AG04450 (cell line): ENCODE measurements at regions of chr2 and their contacts with region 1.

Region 1: GRCh38 chr2:178761759-178762371 is 45.4 kb downstream of the TTN start:
- DNase-seq: peak; percentile 6
- H3K4me3 ChIP-seq: no peak overlapping the region
- H3K27ac ChIP-seq: no peak overlapping the region
- H3K27me3 ChIP-seq: no peaks in the 10 kb centered on the region
- CTCF ChIP-seq: peak; percentile 83

Region 2: DNA sequence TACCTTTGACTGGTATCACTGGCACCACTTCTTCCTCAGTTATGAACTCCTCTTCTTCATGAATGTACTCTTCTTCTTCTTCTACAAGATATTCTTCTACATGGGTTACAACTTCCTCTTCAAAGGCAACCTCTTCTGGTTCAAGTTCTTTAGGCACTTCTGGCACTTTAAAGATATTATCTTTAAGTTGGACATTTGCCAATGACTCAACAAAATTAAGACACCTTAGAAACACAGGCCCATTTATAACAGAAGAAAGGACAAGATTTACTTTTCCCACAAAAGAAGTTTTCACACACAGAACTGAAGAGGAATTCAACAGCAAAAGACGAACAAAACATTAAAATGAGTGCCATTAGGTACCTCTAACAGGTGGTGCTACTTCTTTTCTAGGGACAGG is 82.0 kb before region 1 on chr2:
- CTCF ChIA-PET with region 1: no interaction called
- POLR2A ChIA-PET with region 1: no interaction called
- DNase-seq: no peak
- H3K4me3 ChIP-seq: no peak overlapping the region
- H3K27ac ChIP-seq: no peak overlapping the region
- H3K27me3 ChIP-seq: no peaks in the 10 kb centered on the region
- CTCF ChIP-seq: no peak

Region 3: DNA sequence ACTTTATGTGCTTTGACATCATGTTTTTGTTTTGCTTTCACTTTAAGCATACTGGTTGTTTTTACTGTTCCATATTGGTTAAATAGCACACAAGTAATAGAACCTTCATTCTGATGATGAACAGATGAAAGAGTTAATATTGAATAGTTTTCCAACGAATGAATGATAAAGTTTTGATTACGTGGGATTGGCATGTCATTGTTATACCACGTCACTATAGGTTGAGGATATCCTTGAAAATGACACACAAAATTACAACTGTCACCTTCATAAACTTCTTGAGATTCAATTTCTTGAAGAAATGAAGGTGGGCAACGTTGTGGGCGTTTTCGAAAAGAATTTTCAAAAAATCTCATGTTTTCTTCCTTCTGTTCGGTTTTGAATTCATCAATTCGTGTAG is 11.6 kb before region 1 on chr2:
- CTCF ChIA-PET with region 1: interaction called, 13 read pairs
- POLR2A ChIA-PET with region 1: no interaction called
- DNase-seq: no peak
- H3K4me3 ChIP-seq: no peak overlapping the region
- H3K27ac ChIP-seq: no peak overlapping the region
- H3K27me3 ChIP-seq: no peaks in the 10 kb centered on the region
- CTCF ChIP-seq: no peak

Region 4: DNA sequence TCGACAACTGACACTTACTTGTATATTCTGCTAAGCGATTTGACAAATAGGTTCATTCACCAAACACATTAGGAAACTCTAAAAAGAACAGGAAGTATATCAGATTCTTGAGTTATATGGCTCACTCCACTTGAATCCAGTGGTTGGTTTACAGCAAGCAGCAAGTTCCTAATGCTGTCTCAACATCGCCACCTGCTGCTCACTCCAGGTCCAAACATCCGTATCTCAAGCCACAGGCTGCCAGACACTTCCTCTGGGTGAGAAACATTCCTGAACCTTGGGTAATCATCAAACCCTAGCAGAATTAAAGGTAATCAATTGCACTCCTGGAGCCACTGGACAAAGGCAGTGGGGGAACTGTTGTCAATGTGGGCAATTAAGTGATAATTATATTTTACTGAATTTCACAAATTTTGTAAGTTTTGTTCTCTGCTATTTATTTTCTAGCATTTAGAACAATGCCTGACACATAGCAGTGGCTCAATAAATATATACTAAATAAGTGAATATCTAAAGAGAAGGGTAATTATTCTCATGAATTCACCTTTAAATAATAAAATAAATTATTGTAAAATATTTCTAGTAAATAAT is 152.5 kb after region 1 on chr2:
- CTCF ChIA-PET with region 1: interaction called, 19 read pairs
- POLR2A ChIA-PET with region 1: no interaction called
- DNase-seq: peak; percentile 66
- H3K4me3 ChIP-seq: no peak overlapping the region
- H3K27ac ChIP-seq: no peak overlapping the region
- H3K27me3 ChIP-seq: no peaks in the 10 kb centered on the region
- CTCF ChIP-seq: peak; percentile 91

Region 5: DNA sequence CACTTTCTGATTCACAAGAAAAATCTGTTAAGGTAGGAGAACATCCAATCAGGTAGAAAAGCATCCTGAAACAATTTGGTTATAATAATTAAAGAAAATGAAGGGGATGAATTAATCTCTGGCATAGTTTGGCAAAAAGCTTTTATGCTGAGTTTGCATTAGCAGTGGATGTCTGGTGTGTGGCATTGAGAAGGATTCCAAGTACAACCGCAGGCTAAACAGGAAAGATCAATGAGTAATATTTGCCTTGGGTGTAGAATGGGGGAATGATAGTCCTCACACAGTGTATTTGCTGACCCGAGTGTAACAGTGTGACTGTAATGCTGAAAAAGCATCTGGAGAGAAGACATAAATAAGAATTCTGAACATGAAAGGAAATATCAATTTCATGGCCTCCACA is 571.0 kb after region 1 on chr2:
- CTCF ChIA-PET with region 1: no interaction called
- POLR2A ChIA-PET with region 1: no interaction called
- DNase-seq: no peak
- H3K4me3 ChIP-seq: no peak overlapping the region
- H3K27ac ChIP-seq: no peak overlapping the region
- H3K27me3 ChIP-seq: no peaks in the 10 kb centered on the region
- CTCF ChIP-seq: no peak